Breast epithelium (tissue), 4 donors: ENCODE measurements at regions of chr20 and their contacts with region 1.

Region 1: GRCh38 chr20:50445354-50446151 is 64.6 kb upstream of the PTPN1 start:
- DNase-seq: no peak
- H3K4me3 ChIP-seq: no peak overlapping the region
- H3K27ac ChIP-seq: no peak overlapping the region
- H3K4me1 ChIP-seq: no peaks in the 10 kb centered on the region
- H3K27me3 ChIP-seq: no peaks in the 10 kb centered on the region
- CTCF ChIP-seq: no peak
- POLR2A ChIP-seq: no peak

Region 2: GRCh38 chr20:50321797-50322480 is 123.6 kb before region 1 on chr20:
- intact Hi-C with region 1: loop called (anchors 1 kb)
- DNase-seq: peak in 1 of 2 donors; percentile 49
- H3K4me3 ChIP-seq: peak overlapping the region in 2 of 3 donors; percentile 49 to 64
- H3K27ac ChIP-seq: peak overlapping the region; percentile 94 to 95
- H3K4me1 ChIP-seq: peaks cover 9 to 13% of the 10 kb centered on the region in 2 donors
- H3K27me3 ChIP-seq: no peaks in the 10 kb centered on the region
- CTCF ChIP-seq: no peak
- POLR2A ChIP-seq: no peak